Caco-2 (cell line): ENCODE measurements at regions of chr21 and their contacts with region 1.

Region 1: GRCh38 chr21:29849735-29850176 is 90.0 kb downstream of the GRIK1 start:
- DNase-seq: peak; percentile 56 to 59
- H3K4me3 ChIP-seq: no peak overlapping the region
- H3K4me3 Mint-ChIP-seq: no peak overlapping the region
- H3K27ac Mint-ChIP-seq: no peak overlapping the region
- H3K4me1 ChIP-seq: no peaks in the 10 kb centered on the region
- H3K4me1 Mint-ChIP-seq: no peaks in the 10 kb centered on the region
- H3K27me3 ChIP-seq: no peaks in the 10 kb centered on the region
- H3K27me3 Mint-ChIP-seq: peaks cover 21% of the 10 kb centered on the region
- CTCF ChIP-seq: peak; percentile 77 to 82

Region 2: GRCh38 chr21:29477941-29478340 is 371.8 kb before region 1 on chr21:
- CTCF ChIA-PET with region 1: interaction called, 6 read pairs
- POLR2A ChIA-PET with region 1: no interaction called
- intact Hi-C with region 1: loop called (anchors 1 kb)
- DNase-seq: no peak
- H3K4me3 ChIP-seq: no peak overlapping the region
- H3K4me3 Mint-ChIP-seq: no peak overlapping the region
- H3K27ac Mint-ChIP-seq: no peak overlapping the region
- H3K4me1 ChIP-seq: no peaks in the 10 kb centered on the region
- H3K4me1 Mint-ChIP-seq: no peaks in the 10 kb centered on the region
- H3K27me3 ChIP-seq: no peaks in the 10 kb centered on the region
- H3K27me3 Mint-ChIP-seq: no peaks in the 10 kb centered on the region
- CTCF ChIP-seq: no peak

Region 3: GRCh38 chr21:29697555-29698193 is 152.1 kb before region 1 on chr21:
- CTCF ChIA-PET with region 1: no interaction called
- POLR2A ChIA-PET with region 1: no interaction called
- intact Hi-C with region 1: loop called (anchors 10 kb)
- DNase-seq: no peak
- H3K4me3 ChIP-seq: no peak overlapping the region
- H3K4me3 Mint-ChIP-seq: no peak overlapping the region
- H3K27ac Mint-ChIP-seq: no peak overlapping the region
- H3K4me1 ChIP-seq: no peaks in the 10 kb centered on the region
- H3K4me1 Mint-ChIP-seq: no peaks in the 10 kb centered on the region
- H3K27me3 ChIP-seq: no peaks in the 10 kb centered on the region; the same call in 1 of the 2 replicates
- H3K27me3 Mint-ChIP-seq: peaks cover 13% of the 10 kb centered on the region
- CTCF ChIP-seq: no peak

Region 4: GRCh38 chr21:29860346-29860745 is 10.6 kb after region 1 on chr21:
- CTCF ChIA-PET with region 1: no interaction called
- POLR2A ChIA-PET with region 1: no interaction called
- intact Hi-C with region 1: no loop called
- DNase-seq: no peak
- H3K4me3 ChIP-seq: no peak overlapping the region
- H3K4me3 Mint-ChIP-seq: no peak overlapping the region
- H3K27ac Mint-ChIP-seq: no peak overlapping the region
- H3K4me1 ChIP-seq: no peaks in the 10 kb centered on the region
- H3K4me1 Mint-ChIP-seq: no peaks in the 10 kb centered on the region
- H3K27me3 ChIP-seq: no peaks in the 10 kb centered on the region
- H3K27me3 Mint-ChIP-seq: peaks cover 9% of the 10 kb centered on the region
- CTCF ChIP-seq: no peak